Activated CD8-positive, alpha-beta T cell treated with anti-CD3 and anti-CD28 coated beads for 36 hours (primary cell): ENCODE measurements at regions of chr11 and their contacts with region 1.

Region 1: GRCh38 chr11:60831143-60831500 is 10.8 kb upstream of the CCDC86 start:
- DNase-seq: peak; percentile 90
- ATAC-seq: peak; percentile 95
- H3K4me3 Mint-ChIP-seq: no peak overlapping the region
- H3K27ac Mint-ChIP-seq: no peak overlapping the region
- H3K4me1 Mint-ChIP-seq: peaks cover 2% of the 10 kb centered on the region
- H3K27me3 Mint-ChIP-seq: peaks cover 1% of the 10 kb centered on the region
- CTCF ChIP-seq: peak; percentile 91

Region 2: DNA sequence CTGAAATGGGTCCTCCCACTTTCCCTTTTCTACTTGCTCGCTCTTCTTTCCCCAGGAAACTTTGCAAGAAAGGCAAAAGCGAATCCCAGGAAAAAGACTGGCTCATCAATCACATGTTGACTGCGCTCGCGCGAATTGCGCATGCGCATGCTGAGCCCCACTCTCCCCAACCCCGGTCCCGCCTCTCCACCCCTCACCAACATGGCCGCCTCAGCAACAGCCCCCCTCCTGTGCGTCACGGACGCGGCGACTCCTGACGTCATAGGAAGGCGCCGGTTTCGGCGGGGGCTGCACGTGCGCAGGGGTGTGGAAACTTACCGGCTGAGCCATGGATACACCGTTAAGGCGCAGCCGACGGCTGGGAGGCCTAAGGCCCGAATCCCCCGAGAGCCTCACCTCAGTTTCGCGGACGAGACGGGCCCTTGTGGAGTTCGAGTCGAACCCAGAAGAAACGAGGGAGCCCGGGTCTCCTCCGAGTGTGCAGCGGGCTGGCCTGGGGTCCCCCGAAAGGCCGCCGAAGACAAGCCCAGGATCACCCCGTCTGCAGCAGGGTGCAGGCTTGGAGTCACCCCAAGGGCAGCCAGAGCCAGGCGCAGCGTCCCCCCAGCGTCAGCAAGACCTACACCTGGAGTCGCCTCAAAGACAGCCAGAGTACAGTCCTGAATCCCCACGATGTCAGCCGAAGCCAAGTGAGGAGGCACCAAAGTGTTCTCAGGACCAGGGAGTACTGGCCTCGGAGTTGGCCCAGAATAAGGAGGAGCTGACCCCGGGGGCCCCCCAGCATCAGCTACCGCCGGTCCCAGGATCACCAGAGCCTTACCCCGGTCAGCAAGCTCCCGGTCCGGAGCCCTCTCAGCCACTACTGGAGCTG is 10.9 kb after region 1 on chr11 and contains the start of gene CCDC86:
- CTCF ChIA-PET with region 1: interaction called, 51 read pairs
- POLR2A ChIA-PET with region 1: interaction called, 4 read pairs
- intact Hi-C with region 1: no loop called
- DNase-seq: peak; percentile 96
- ATAC-seq: peak; percentile 98
- H3K4me3 Mint-ChIP-seq: peak within 1 kb of the TSS; percentile 75
- H3K27ac Mint-ChIP-seq: peak within 1 kb of the TSS; percentile 94
- H3K4me1 Mint-ChIP-seq: peaks cover 38% of the 10 kb centered on the region
- H3K27me3 Mint-ChIP-seq: no peaks in the 10 kb centered on the region
- CTCF ChIP-seq: no peak
- total RNA-seq, gene CCDC86: 48.1 to 51.4 TPM

Region 3: GRCh38 chr11:60855726-60856633 is 24.9 kb after region 1 on chr11 and contains the start of gene PTGDR2:
- CTCF ChIA-PET with region 1: interaction called, 13 read pairs
- POLR2A ChIA-PET with region 1: interaction called, 3 read pairs
- intact Hi-C with region 1: no loop called
- DNase-seq: no peak
- ATAC-seq: no peak
- H3K4me3 Mint-ChIP-seq: no peak within 1 kb of the TSS
- H3K27ac Mint-ChIP-seq: no peak within 1 kb of the TSS
- H3K4me1 Mint-ChIP-seq: peaks cover 23% of the 10 kb centered on the region
- H3K27me3 Mint-ChIP-seq: no peaks in the 10 kb centered on the region
- CTCF ChIP-seq: no peak
- total RNA-seq, gene PTGDR2: 0.23 to 0.38 TPM

Region 4: DNA sequence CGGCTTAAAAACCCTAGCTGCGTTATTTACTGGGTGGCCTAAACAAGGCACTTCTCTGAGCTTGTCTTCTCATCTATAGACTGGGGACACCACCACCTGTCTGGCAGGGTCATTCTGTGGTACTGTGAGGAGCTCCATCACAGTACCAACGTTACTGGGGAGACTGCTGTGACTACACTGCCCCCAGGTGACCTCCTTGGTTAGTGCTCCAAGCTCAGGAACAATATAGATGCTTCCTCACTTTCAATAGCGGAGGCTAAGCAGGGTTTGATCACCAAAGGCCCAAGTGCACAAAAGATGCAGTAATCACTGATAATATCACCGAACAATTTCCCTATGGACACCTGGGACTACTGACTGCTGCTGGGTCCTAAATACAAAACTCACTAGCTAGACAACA is 56.4 kb after region 1 on chr11:
- CTCF ChIA-PET with region 1: interaction called, 153 read pairs
- POLR2A ChIA-PET with region 1: interaction called, 3 read pairs
- intact Hi-C with region 1: loop called (anchors 1 kb)
- DNase-seq: peak; percentile 67
- ATAC-seq: peak; percentile 92
- H3K4me3 Mint-ChIP-seq: no peak overlapping the region
- H3K27ac Mint-ChIP-seq: no peak overlapping the region
- H3K4me1 Mint-ChIP-seq: peaks cover 3% of the 10 kb centered on the region
- H3K27me3 Mint-ChIP-seq: no peaks in the 10 kb centered on the region
- CTCF ChIP-seq: no peak

Region 5: GRCh38 chr11:60906132-60906972 is 75.2 kb after region 1 on chr11 and contains the start of gene PRPF19:
- CTCF ChIA-PET with region 1: interaction called, 53 read pairs
- POLR2A ChIA-PET with region 1: interaction called, 3 read pairs
- intact Hi-C with region 1: no loop called
- DNase-seq: peak; percentile 99
- ATAC-seq: peak; percentile 97
- H3K4me3 Mint-ChIP-seq: peak within 1 kb of the TSS; percentile 89
- H3K27ac Mint-ChIP-seq: peak within 1 kb of the TSS; percentile 95
- H3K4me1 Mint-ChIP-seq: peaks cover 50% of the 10 kb centered on the region
- H3K27me3 Mint-ChIP-seq: no peaks in the 10 kb centered on the region
- CTCF ChIP-seq: no peak
- total RNA-seq, gene PRPF19: 142 to 150 TPM

Region 6: GRCh38 chr11:61187505-61188130 is 356.5 kb after region 1 on chr11:
- CTCF ChIA-PET with region 1: interaction called, 44 read pairs
- POLR2A ChIA-PET with region 1: no interaction called
- intact Hi-C with region 1: loop called (anchors 2 kb)
- DNase-seq: peak; percentile 95
- ATAC-seq: peak; percentile 100
- H3K4me3 Mint-ChIP-seq: no peak overlapping the region
- H3K27ac Mint-ChIP-seq: no peak overlapping the region
- H3K4me1 Mint-ChIP-seq: peaks cover 3% of the 10 kb centered on the region
- H3K27me3 Mint-ChIP-seq: no peaks in the 10 kb centered on the region
- CTCF ChIP-seq: peak; percentile 98